ENCODE measurements at regions of chr1 and their contacts with region 1.

Region 1: DNA sequence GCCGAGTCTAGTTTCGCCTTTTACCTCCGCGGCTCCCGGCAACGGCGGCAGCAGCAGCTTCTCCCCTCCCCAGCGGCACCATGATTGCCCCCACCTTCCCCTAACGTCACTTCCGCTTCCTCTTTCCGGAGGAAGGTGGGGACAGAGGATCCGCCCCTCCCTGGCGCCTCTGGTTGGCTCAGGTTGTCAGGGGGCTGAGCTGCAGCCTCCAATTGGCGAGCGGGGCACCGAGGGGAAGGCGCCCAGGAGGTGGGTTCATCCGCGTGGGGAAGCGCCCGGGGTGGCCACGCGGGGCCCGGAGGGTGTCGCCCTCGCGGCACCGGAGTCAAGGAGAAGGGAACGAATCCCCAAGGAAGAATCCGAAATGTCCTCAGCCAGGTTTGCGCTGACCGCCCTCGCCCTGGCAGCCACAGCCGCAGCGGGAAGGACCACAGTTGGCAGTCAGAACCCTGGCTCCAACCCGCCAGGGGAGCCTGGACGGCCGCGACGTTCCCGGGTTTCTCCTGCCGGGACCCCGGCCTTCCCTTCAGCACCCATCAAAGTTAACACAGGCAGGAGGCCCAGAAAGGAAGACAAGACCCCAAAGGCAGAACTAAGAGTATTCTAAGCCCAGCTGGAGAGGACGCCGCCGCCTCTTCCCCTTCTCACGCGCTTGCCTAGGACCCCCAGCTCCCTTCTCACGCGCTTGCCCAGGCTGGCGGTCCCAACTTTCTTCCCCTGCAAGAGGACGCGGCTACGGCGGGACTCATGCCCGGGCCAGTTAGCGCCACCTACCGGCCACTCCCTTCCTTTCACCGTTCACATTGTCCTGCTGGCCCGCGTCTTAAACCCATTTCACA is at the start of gene MTF1:
- DNase-seq: peak; percentile 98
- ATAC-seq: peak; percentile 98
- H3K4me3 Mint-ChIP-seq: peak within 1 kb of the TSS; percentile 82
- H3K27ac Mint-ChIP-seq: peak within 1 kb of the TSS; percentile 96
- H3K4me1 Mint-ChIP-seq: peaks cover 35% of the 10 kb centered on the region
- H3K27me3 Mint-ChIP-seq: no peaks in the 10 kb centered on the region
- CTCF ChIP-seq: peak; percentile 97
- total RNA-seq, gene MTF1: 17.7 to 21.3 TPM

Region 2: GRCh38 chr1:37692078-37692833 is 167.5 kb before region 1 on chr1 and contains the start of gene CDCA8:
- CTCF ChIA-PET with region 1: interaction called, 24 read pairs
- POLR2A ChIA-PET with region 1: interaction called, 5 read pairs
- intact Hi-C with region 1: loop called (anchors 5 kb)
- DNase-seq: peak; percentile 99
- ATAC-seq: peak; percentile 90
- H3K4me3 Mint-ChIP-seq: peak within 1 kb of the TSS; percentile 98
- H3K27ac Mint-ChIP-seq: peak within 1 kb of the TSS; percentile 93
- H3K4me1 Mint-ChIP-seq: peaks cover 31% of the 10 kb centered on the region
- H3K27me3 Mint-ChIP-seq: no peaks in the 10 kb centered on the region
- CTCF ChIP-seq: no peak
- total RNA-seq, gene CDCA8: 53.7 to 56.0 TPM

Region 3: GRCh38 chr1:37822906-37823815 is 36.6 kb before region 1 on chr1:
- CTCF ChIA-PET with region 1: interaction called, 11 read pairs
- POLR2A ChIA-PET with region 1: no interaction called
- intact Hi-C with region 1: no loop called
- DNase-seq: peak; percentile 38
- ATAC-seq: peak; percentile 55
- H3K4me3 Mint-ChIP-seq: no peak overlapping the region
- H3K27ac Mint-ChIP-seq: peak overlapping the region; percentile 57
- H3K4me1 Mint-ChIP-seq: peaks cover 19% of the 10 kb centered on the region
- H3K27me3 Mint-ChIP-seq: no peaks in the 10 kb centered on the region
- CTCF ChIP-seq: no peak

Region 4: GRCh38 chr1:37846647-37847339 is 12.9 kb before region 1 on chr1:
- CTCF ChIA-PET with region 1: interaction called, 58 read pairs
- POLR2A ChIA-PET with region 1: interaction called, 9 read pairs
- intact Hi-C with region 1: no loop called
- DNase-seq: peak; percentile 28
- ATAC-seq: no peak
- H3K4me3 Mint-ChIP-seq: peak overlapping the region; percentile 69
- H3K27ac Mint-ChIP-seq: peak overlapping the region; percentile 86
- H3K4me1 Mint-ChIP-seq: peaks cover 47% of the 10 kb centered on the region
- H3K27me3 Mint-ChIP-seq: no peaks in the 10 kb centered on the region
- CTCF ChIP-seq: no peak

Region 5: GRCh38 chr1:37879870-37880269 is 20.1 kb after region 1 on chr1:
- CTCF ChIA-PET with region 1: interaction called, 12 read pairs
- POLR2A ChIA-PET with region 1: interaction called, 4 read pairs
- intact Hi-C with region 1: no loop called
- DNase-seq: no peak
- ATAC-seq: no peak
- H3K4me3 Mint-ChIP-seq: no peak overlapping the region
- H3K27ac Mint-ChIP-seq: no peak overlapping the region
- H3K4me1 Mint-ChIP-seq: no peaks in the 10 kb centered on the region
- H3K27me3 Mint-ChIP-seq: no peaks in the 10 kb centered on the region
- CTCF ChIP-seq: no peak